Activated B cell treated with CpG ODN at 0.5 μM for 24 hours (primary cell): ENCODE measurements at regions of chr5 and their contacts with region 1.

Region 1: DNA sequence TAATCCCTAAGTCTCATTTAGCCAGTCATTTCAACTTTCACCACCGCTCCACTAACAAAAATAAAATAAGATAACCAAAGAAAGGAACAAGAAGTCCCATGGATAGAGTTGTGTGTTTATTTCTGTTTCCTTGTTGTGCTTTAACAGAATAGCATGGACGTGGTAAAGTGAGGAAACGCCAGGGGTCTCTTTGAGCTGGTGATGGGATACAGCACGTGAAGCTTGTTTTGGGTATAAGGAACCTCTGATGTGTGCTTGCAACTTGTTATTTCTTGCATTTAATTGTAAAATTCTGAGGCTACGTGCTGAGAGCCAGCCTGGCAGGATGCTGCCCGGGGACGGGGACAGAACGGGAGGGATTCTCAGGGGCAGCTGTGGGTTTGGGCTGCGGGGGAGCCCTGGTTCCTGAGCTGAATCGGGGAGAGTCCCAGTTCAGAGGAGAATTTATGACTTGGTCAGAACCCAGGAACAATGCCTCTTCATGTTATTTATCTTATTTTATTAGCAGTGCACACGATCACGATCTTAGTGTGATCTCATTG is 63.4 kb downstream of the ANKRD33B start:
- DNase-seq: no peak
- ATAC-seq: no peak
- H3K4me3 Mint-ChIP-seq: peak overlapping the region; percentile 80
- H3K27ac Mint-ChIP-seq: peak overlapping the region; percentile 85
- H3K4me1 Mint-ChIP-seq: peaks cover 68% of the 10 kb centered on the region
- H3K27me3 Mint-ChIP-seq: no peaks in the 10 kb centered on the region
- CTCF ChIP-seq: no peak

Region 2: DNA sequence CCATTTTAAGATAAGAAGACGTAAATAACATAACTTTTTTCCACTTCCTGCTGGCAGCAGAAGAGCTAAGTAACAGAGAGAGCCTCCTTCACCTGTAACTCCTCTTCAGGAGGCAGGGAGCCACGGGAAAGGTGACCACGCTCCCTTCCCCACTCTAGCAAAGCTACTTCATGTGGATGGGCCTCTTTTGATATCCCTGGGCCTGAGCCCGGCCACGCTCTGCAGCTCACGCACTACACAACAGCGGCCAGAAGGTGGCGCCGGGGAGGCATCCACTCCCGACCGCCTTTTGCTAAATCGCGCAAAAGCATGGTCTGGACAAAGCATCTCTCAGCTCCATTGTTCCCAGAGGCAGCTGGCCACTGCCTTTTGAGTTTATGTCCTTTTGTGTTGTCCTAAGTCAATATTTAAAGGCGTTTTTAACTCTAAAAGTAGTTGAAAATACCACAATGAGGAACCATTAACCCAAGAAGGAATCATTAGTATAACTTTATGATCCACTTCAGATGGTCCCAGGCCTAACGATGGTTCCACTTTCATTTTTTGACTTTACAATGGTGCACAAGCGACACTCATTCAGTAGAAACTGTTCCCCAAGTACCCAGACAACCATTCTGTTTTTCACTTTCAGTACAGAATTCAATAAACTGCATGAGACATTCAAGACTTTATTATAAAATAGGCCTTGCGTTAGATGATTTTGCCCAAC is 343.1 kb before region 1 on chr5:
- CTCF ChIA-PET with region 1: interaction called, 6 read pairs
- POLR2A ChIA-PET with region 1: no interaction called
- intact Hi-C with region 1: loop called (anchors 1 kb)
- DNase-seq: peak; percentile 73
- ATAC-seq: peak; percentile 99
- H3K4me3 Mint-ChIP-seq: no peak overlapping the region
- H3K27ac Mint-ChIP-seq: no peak overlapping the region
- H3K4me1 Mint-ChIP-seq: peaks cover 13% of the 10 kb centered on the region
- H3K27me3 Mint-ChIP-seq: peaks cover 2% of the 10 kb centered on the region
- CTCF ChIP-seq: peak; percentile 92

Region 3: DNA sequence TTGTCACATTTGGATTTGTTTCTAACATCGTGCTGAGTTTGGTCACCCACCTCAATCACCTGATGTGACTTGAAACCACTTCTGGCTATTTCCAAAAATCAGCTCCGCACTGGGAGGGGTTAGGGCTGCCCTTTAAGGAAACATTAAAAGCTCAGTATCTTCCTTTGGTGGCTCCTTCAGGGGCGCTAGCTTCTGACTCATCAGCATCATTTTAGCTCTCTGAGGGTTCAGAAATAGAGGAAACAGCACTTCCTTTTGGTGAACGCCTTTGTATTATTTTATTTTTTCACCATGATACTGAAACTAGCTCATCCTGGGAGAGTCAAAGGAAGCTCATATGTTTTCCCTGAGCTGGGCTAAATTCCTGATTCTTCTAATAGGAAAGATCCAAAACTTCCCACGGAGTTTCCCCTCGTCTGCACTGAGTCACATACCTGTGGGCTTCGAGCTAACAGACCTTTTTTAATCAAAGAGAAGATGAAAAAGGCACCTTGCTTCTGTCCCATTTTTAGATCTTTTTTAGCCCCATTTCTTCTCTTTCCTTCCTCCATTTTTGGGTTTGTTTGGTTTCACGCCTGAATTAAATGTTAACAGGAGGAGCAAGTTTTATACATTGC is 137.3 kb before region 1 on chr5:
- CTCF ChIA-PET with region 1: interaction called, 19 read pairs
- POLR2A ChIA-PET with region 1: interaction called, 3 read pairs
- intact Hi-C with region 1: no loop called
- DNase-seq: no peak
- ATAC-seq: peak; percentile 98
- H3K4me3 Mint-ChIP-seq: peak overlapping the region; percentile 58
- H3K27ac Mint-ChIP-seq: peak overlapping the region; percentile 56
- H3K4me1 Mint-ChIP-seq: peaks cover 47% of the 10 kb centered on the region
- H3K27me3 Mint-ChIP-seq: no peaks in the 10 kb centered on the region
- CTCF ChIP-seq: no peak

Region 4: DNA sequence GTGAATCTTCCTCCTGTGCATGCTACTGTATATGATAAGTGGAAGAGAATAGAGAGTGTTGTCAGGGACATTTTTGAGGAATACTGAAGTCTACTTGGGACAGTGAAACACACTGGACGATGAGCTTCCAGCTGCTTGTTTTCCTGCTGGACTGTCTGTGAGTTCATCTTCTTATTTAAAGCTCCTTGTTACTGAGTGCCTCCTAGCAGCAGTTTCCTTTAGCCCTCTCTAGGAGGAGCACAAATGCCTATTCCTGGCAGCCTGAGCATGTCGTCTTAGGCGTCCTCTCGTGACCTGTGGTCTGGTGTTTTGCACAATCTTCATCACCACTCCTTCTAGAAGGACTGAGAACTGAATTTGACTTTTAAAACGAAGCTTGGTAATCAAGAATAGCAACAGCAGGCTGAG is 19.6 kb before region 1 on chr5:
- CTCF ChIA-PET with region 1: interaction called, 30 read pairs
- POLR2A ChIA-PET with region 1: interaction called, 54 read pairs
- intact Hi-C with region 1: loop called (anchors 1 kb)
- DNase-seq: no peak
- ATAC-seq: peak; percentile 35
- H3K4me3 Mint-ChIP-seq: peak overlapping the region; percentile 80
- H3K27ac Mint-ChIP-seq: peak overlapping the region; percentile 90
- H3K4me1 Mint-ChIP-seq: peaks cover 67% of the 10 kb centered on the region
- H3K27me3 Mint-ChIP-seq: no peaks in the 10 kb centered on the region
- CTCF ChIP-seq: no peak

Region 5: GRCh38 chr5:10645146-10645545 is 17.9 kb after region 1 on chr5:
- CTCF ChIA-PET with region 1: interaction called, 4 read pairs
- POLR2A ChIA-PET with region 1: interaction called, 17 read pairs
- intact Hi-C with region 1: loop called (anchors 2 kb)
- DNase-seq: peak; percentile 11
- ATAC-seq: peak; percentile 70
- H3K4me3 Mint-ChIP-seq: no peak overlapping the region
- H3K27ac Mint-ChIP-seq: peak overlapping the region; percentile 4
- H3K4me1 Mint-ChIP-seq: peaks cover 57% of the 10 kb centered on the region
- H3K27me3 Mint-ChIP-seq: no peaks in the 10 kb centered on the region
- CTCF ChIP-seq: no peak

Region 6: DNA sequence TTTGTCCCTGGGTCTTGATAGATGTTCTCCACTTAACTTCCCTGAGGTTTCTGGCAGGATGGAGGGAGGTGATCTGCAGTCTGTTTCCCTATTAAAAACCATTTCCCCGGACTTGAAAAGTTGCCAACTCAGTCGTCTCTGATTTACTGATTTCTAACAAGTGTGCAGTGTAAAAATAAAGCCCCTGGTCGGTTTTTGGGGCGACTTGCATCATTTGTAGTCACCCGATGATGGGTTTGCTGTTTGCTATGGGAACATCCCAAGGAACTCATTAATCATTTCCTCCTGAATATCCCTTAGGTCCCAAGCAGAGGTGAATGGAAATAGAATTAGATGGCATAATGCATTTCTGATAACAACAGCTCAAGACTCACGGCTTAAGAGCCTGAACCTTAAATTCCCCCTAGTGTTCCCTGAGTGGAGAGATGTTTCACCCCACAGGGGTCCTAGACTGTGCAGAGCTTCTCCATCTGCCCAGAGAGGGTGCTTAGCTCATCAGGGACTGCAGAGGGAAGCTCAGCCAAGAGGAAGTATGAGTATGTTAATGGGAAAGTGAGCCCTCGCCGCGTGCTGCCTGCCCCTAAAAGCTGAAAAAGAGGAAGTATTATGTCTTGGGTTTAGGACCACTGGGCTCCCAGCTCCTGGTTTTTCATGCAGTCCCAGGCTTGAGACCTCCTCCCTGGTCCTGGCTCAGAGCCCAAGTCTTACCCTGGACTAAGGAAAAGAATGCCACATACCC is 248.9 kb after region 1 on chr5:
- CTCF ChIA-PET with region 1: no interaction called
- POLR2A ChIA-PET with region 1: no interaction called
- intact Hi-C with region 1: no loop called
- DNase-seq: no peak
- ATAC-seq: no peak
- H3K4me3 Mint-ChIP-seq: no peak overlapping the region
- H3K27ac Mint-ChIP-seq: no peak overlapping the region
- H3K4me1 Mint-ChIP-seq: peaks cover 2% of the 10 kb centered on the region
- H3K27me3 Mint-ChIP-seq: peaks cover 10% of the 10 kb centered on the region
- CTCF ChIP-seq: no peak